Activated T-helper 1 cell treated with anti-CD3 and anti-CD28 coated beads, Interleukin-12 subunit alpha, Interleukin-12 subunit beta, Interleukin-2, Interleukin-4 antibody, amounts not matched to agents 30 ng/mL and 10 ng/mL and 1 ng/mL, durations not matched to agents 14 hours and 24 hours and 36 hours (primary cell): ENCODE measurements at regions of chr5 and their contacts with region 1.

Region 1: GRCh38 chr5:156947796-156948324 is 15.2 kb downstream of the TIMD4 start:
- DNase-seq: peak; percentile 46
- H3K4me3 Mint-ChIP-seq: peak overlapping the region; percentile 59
- H3K27ac Mint-ChIP-seq: peak overlapping the region; percentile 87
- H3K4me1 Mint-ChIP-seq: peaks cover 53% of the 10 kb centered on the region
- H3K27me3 Mint-ChIP-seq: no peaks in the 10 kb centered on the region

Region 2: DNA sequence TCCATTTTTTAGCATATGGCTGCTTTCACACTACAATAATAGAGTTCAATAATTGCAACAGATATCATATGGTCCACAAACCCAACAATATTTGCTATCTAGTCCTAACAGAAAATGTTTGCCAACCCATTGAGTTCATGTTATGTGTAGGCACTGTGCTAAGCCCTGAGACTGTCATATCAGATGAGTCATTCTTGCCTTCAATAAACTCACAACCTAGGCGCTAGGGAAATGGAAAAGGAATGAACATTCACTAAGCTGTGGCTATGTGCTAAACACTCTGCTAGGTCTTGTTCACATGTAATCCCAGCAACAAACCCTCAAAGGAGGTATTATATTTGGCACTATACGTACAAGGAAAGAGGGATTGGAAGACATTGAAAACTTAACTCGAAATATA is 23.6 kb after region 1 on chr5:
- intact Hi-C with region 1: loop called (anchors 1 kb)
- DNase-seq: no peak
- H3K4me3 Mint-ChIP-seq: no peak overlapping the region
- H3K27ac Mint-ChIP-seq: peak overlapping the region; percentile 77
- H3K4me1 Mint-ChIP-seq: peaks cover 25% of the 10 kb centered on the region
- H3K27me3 Mint-ChIP-seq: peaks cover 2% of the 10 kb centered on the region